ENCODE measurements at regions of chr10 and their contacts with region 1.

Region 1: DNA sequence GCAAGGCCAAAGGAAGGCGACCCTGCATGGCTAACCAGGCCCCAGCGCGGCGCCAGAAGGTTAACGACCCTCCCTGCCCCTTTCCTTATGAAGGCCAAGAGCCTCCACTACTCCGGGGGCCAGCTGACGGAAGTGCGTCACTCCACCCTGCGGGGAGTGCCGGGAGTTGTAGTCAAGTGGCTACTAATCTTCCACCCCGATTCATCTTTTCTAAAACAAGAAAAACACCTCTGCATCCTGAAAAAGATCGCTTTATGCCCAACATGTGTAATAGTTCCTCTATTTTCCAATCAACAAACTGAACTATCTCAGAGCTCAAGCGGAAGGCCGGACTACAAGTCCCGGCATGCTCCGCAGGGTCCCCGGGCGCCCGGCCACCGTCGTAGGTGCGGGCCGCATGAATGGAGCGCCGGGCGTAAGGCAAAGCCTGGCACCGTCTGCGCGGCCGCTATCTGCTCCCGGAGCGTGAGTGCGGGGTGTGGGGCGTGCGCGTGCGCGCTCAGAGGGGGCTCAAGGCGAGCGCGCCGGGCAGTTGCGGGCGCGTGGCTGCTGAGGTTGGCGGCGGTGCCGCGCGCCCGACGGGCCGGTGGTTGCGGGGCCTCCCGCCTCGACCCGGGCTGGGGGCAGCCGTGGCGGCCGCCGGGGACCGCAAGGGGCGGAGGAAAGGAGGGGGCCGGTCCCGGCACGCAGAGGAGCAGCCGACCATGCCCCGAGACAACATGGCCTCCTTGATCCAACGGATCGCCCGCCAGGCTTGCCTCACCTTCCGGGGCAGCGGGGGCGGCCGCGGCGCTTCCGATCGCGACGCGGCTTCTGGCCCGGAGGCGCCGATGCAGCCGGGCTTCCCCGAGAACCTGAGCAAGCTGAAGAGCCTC is at the start of gene ADO:
- DNase-seq: peak; percentile 79
- ATAC-seq: peak; percentile 91
- H3K4me3 ChIP-seq: peak within 1 kb of the TSS; percentile 94
- H3K27ac ChIP-seq: peak within 1 kb of the TSS; percentile 99
- H3K4me1 ChIP-seq: peaks cover 8% of the 10 kb centered on the region; the same call in 1 of the 2 replicates
- H3K27me3 ChIP-seq: no peaks in the 10 kb centered on the region; the same call in 1 of the 2 replicates
- CTCF ChIP-seq: no peak
- POLR2A ChIP-seq: peak; percentile 62
- RAD21 ChIP-seq: no peak
- total RNA-seq, gene ADO: 8.1 and 11.4 TPM in 2 replicates

Region 2: DNA sequence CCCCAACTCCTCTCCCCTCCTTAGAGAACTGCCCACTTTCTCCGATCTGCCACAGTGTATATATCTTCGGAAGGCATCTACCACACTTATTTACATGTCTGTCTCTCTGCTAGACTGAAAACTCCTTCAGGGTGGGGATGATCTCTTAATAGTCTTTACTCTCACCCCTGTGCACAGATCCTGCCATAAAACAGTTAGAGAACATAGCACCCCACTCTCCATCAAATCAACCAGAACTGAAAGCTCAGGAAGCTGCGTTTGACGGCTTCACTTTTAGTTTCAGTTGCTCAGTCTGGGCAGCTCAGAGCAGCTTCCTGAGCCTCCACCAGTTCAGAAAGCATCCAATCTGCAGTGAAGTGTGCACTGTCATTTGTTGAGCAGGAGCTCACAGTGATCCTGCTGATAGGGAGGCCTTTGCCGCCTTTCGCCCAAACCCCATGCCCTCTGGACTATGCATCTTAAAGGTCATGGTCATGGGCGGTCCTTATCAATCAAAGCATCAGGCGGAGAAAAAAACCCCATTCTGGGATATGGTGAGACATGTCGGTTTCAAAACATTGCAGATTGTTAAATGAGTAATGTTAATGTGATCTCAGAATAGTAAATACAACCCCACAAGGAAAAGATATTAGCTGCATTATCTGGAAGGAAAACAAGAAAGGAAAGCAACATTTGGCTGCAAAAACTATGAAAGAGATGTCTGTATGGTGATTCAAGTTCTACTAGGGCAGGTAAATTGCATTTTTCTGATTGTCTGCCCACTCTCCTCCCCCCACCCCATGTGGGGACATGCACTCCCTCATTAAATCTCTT is 167.1 kb before region 1 on chr10:
- CTCF ChIA-PET with region 1: no interaction called
- POLR2A ChIA-PET with region 1: no interaction called
- dilution Hi-C with region 1: no loop called
- in situ Hi-C with region 1: no loop called
- intact Hi-C with region 1: loop called (anchors 2 kb)
- DNase-seq: peak; percentile 61
- ATAC-seq: peak; percentile 92
- H3K4me3 ChIP-seq: peak overlapping the region; percentile 50
- H3K27ac ChIP-seq: peak overlapping the region; percentile 35; the same call in 1 of the 2 replicates
- H3K4me1 ChIP-seq: peaks cover 4% of the 10 kb centered on the region; the same call in 1 of the 2 replicates
- H3K27me3 ChIP-seq: no peaks in the 10 kb centered on the region
- CTCF ChIP-seq: no peak
- POLR2A ChIP-seq: no peak
- RAD21 ChIP-seq: no peak

Region 3: GRCh38 chr10:62661143-62661542 is 143.4 kb before region 1 on chr10:
- CTCF ChIA-PET with region 1: no interaction called
- POLR2A ChIA-PET with region 1: no interaction called
- dilution Hi-C with region 1: no loop called
- in situ Hi-C with region 1: no loop called
- intact Hi-C with region 1: no loop called
- DNase-seq: no peak
- ATAC-seq: no peak
- H3K4me3 ChIP-seq: no peak overlapping the region
- H3K27ac ChIP-seq: no peak overlapping the region
- H3K4me1 ChIP-seq: no peaks in the 10 kb centered on the region
- H3K27me3 ChIP-seq: peaks cover 6% of the 10 kb centered on the region
- CTCF ChIP-seq: no peak
- POLR2A ChIP-seq: no peak
- RAD21 ChIP-seq: no peak

Region 4: GRCh38 chr10:62788861-62789467 is 15.6 kb before region 1 on chr10:
- CTCF ChIA-PET with region 1: no interaction called
- POLR2A ChIA-PET with region 1: no interaction called
- dilution Hi-C with region 1: no loop called
- in situ Hi-C with region 1: no loop called
- intact Hi-C with region 1: no loop called
- DNase-seq: peak; percentile 22
- ATAC-seq: peak; percentile 53
- H3K4me3 ChIP-seq: no peak overlapping the region
- H3K27ac ChIP-seq: no peak overlapping the region
- H3K4me1 ChIP-seq: no peaks in the 10 kb centered on the region
- H3K27me3 ChIP-seq: no peaks in the 10 kb centered on the region
- CTCF ChIP-seq: no peak
- POLR2A ChIP-seq: no peak
- RAD21 ChIP-seq: no peak